Prostate gland (tissue), 2 donors: ENCODE measurements at regions of chr21 and their contacts with region 1.

Region 1: GRCh38 chr21:41953831-41954653 is at the start of gene C2CD2:
- DNase-seq: no peak
- H3K4me3 ChIP-seq: peak within 1 kb of the TSS; percentile 87 to 89
- H3K27ac ChIP-seq: peak within 1 kb of the TSS; percentile 78 to 79
- H3K4me1 ChIP-seq: peaks cover 14% of the 10 kb centered on the region
- H3K27me3 ChIP-seq: no peaks in the 10 kb centered on the region
- CTCF ChIP-seq: no peak
- POLR2A ChIP-seq: no peak
- total RNA-seq, gene C2CD2: 27.3 to 30.5 TPM

Region 2: GRCh38 chr21:41879190-41879998 is 74.6 kb before region 1 on chr21 and contains the start of gene PRDM15:
- intact Hi-C with region 1: loop called (anchors 5 kb)
- DNase-seq: peak; percentile 69
- H3K4me3 ChIP-seq: peak within 1 kb of the TSS; percentile 66
- H3K27ac ChIP-seq: peak within 1 kb of the TSS; percentile 71 to 85
- H3K4me1 ChIP-seq: no peaks in the 10 kb centered on the region
- H3K27me3 ChIP-seq: no peaks in the 10 kb centered on the region
- CTCF ChIP-seq: no peak
- POLR2A ChIP-seq: peak; percentile 7
- total RNA-seq, gene PRDM15: 6.7 to 18.1 TPM

Region 3: GRCh38 chr21:42009831-42010523 is 55.9 kb after region 1 on chr21 and contains the start of gene ZBTB21:
- intact Hi-C with region 1: loop called (anchors 5 kb)
- DNase-seq: peak; percentile 98
- H3K4me3 ChIP-seq: peak within 1 kb of the TSS; percentile 80 to 83
- H3K27ac ChIP-seq: peak within 1 kb of the TSS; percentile 96 to 100
- H3K4me1 ChIP-seq: no peaks in the 10 kb centered on the region
- H3K27me3 ChIP-seq: no peaks in the 10 kb centered on the region
- CTCF ChIP-seq: peak in 1 of 4 experiments; percentile 20
- POLR2A ChIP-seq: peak; percentile 98
- total RNA-seq, gene ZBTB21: 12.3 to 13.6 TPM